Esophagus muscularis mucosa (tissue), 4 donors: ENCODE measurements at regions of chr4 and their contacts with region 1.

Region 1: DNA sequence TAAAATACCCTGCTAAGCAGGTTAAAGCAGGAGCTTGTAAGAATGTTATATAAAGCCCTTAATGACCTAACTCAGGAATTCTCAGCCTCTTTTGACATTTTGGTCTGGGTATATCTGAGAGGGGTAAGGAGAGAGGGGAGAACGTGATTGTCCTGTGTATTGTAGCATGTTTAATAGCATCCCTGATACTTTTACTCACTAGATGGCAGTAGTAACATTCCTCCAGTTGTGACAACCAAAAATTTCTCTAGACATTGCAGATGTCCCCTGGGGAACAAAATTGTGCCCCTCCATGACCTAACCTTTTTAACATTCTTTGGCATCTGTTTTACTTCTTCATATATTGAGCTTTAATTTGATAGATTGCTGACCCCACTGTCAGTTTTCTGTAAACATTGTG is 17.9 kb downstream of the SMARCA5 start:
- DNase-seq: no peak
- H3K4me3 ChIP-seq: no peak overlapping the region
- H3K27ac ChIP-seq: no peak overlapping the region
- H3K4me1 ChIP-seq: peaks cover 6 to 25% (median 12%) of the 10 kb centered on the region in 4 donors
- H3K27me3 ChIP-seq: no peaks in the 10 kb centered on the region
- CTCF ChIP-seq: peak in 1 of 3 experiments; percentile 38
- EP300 ChIP-seq: no peak
- POLR2A ChIP-seq: no peak

Region 2: GRCh38 chr4:143667461-143667860 is 136.1 kb after region 1 on chr4:
- intact Hi-C with region 1: no loop called
- DNase-seq: no peak
- H3K4me3 ChIP-seq: no peak overlapping the region
- H3K27ac ChIP-seq: peak overlapping the region in 2 of 4 donors; percentile 18 to 27
- H3K4me1 ChIP-seq: peaks cover 3 to 13% (median 8%) of the 10 kb centered on the region in 4 donors
- H3K27me3 ChIP-seq: no peaks in the 10 kb centered on the region
- CTCF ChIP-seq: no peak
- EP300 ChIP-seq: no peak
- POLR2A ChIP-seq: no peak

Region 3: DNA sequence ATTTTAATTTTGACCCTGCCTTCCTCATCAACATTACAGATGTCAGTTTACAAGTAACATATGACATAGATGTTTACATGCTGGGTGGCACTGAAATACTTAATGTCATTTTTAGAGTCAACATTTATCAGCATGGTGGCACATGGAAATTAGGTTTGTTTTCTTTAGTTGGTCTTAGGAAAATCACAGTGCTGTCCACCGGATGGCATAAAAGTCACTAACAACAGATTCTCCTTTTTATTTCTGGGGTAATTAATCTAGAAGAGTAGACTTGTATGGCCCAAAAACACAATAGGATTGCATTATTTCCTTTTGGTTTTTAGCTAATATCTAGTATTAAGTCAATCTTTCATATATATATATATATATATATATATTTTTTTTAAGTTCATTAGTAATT is 1026.0 kb after region 1 on chr4:
- intact Hi-C with region 1: no loop called
- DNase-seq: no peak
- H3K4me3 ChIP-seq: no peak overlapping the region
- H3K27ac ChIP-seq: no peak overlapping the region
- H3K4me1 ChIP-seq: peaks cover 0 to 4% (median 2%) of the 10 kb centered on the region in 4 donors
- H3K27me3 ChIP-seq: no peaks in the 10 kb centered on the region
- CTCF ChIP-seq: no peak
- EP300 ChIP-seq: no peak
- POLR2A ChIP-seq: no peak

Region 4: GRCh38 chr4:145107126-145107525 is 1575.7 kb after region 1 on chr4:
- intact Hi-C with region 1: loop called (anchors 10 kb)
- DNase-seq: no peak
- H3K4me3 ChIP-seq: no peak overlapping the region
- H3K27ac ChIP-seq: no peak overlapping the region
- H3K4me1 ChIP-seq: peaks cover 0 to 11% (median 6%) of the 10 kb centered on the region in 4 donors
- H3K27me3 ChIP-seq: no peaks in the 10 kb centered on the region
- CTCF ChIP-seq: no peak
- EP300 ChIP-seq: no peak
- POLR2A ChIP-seq: no peak